ENCODE measurements at regions of chr14 and their contacts with region 1.

Region 1: GRCh38 chr14:49461529-49462401 is 124.4 kb downstream of the RPS29 start:
- DNase-seq: peak; percentile 66
- H3K4me3 ChIP-seq: no peak overlapping the region
- H3K27ac ChIP-seq: no peak overlapping the region
- H3K4me1 ChIP-seq: no peaks in the 10 kb centered on the region
- H3K27me3 ChIP-seq: no peaks in the 10 kb centered on the region
- CTCF ChIP-seq: peak; percentile 76 to 77

Region 2: GRCh38 chr14:48670939-48671338 is 790.8 kb before region 1 on chr14:
- CTCF ChIA-PET with region 1: no interaction called
- dilution Hi-C with region 1: no loop called
- in situ Hi-C with region 1: no loop called
- intact Hi-C with region 1: no loop called
- DNase-seq: no peak
- H3K4me3 ChIP-seq: no peak overlapping the region
- H3K27ac ChIP-seq: no peak overlapping the region
- H3K4me1 ChIP-seq: no peaks in the 10 kb centered on the region
- H3K27me3 ChIP-seq: no peaks in the 10 kb centered on the region
- CTCF ChIP-seq: no peak

Region 3: DNA sequence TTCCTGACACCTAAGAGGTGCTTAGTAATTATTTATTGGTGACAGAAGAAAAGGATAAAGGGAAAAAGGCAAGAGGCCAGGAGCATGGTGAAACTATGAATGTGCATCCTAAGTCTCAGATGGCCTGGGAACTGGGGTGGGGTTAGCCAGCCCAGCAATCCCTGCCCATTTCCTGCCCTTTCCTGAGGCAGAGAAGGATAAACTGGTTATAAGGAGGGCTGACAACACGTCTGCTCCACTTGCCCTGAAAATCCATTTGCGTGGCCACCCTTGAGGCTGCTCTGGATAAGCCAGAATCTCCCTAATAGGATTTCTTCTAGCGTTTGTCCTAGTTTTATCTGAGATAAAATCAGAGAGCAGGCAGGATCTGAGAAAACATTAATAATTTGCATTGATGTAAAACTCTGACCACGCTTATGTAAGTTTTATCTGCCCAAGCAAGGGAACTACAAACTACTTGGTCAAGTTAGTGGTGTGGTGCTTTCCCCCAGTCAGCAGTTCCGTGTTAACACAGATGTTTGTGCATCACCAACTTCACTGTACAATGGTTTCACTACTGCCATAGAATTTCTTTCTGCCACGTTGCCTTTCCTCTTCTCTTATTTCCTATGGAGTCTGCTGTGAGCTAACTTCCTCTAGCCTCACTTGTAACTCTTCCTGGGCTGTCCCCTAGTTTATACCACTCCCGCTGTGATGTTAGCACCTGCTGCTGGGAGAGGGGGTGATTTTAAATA is 268.3 kb before region 1 on chr14:
- CTCF ChIA-PET with region 1: no interaction called
- dilution Hi-C with region 1: no loop called
- in situ Hi-C with region 1: no loop called
- intact Hi-C with region 1: no loop called
- DNase-seq: no peak
- H3K4me3 ChIP-seq: no peak overlapping the region
- H3K27ac ChIP-seq: no peak overlapping the region
- H3K4me1 ChIP-seq: no peaks in the 10 kb centered on the region
- H3K27me3 ChIP-seq: no peaks in the 10 kb centered on the region
- CTCF ChIP-seq: no peak

Region 4: GRCh38 chr14:49487238-49487637 is 25.5 kb after region 1 on chr14:
- CTCF ChIA-PET with region 1: no interaction called
- dilution Hi-C with region 1: no loop called
- in situ Hi-C with region 1: no loop called
- intact Hi-C with region 1: no loop called
- DNase-seq: no peak
- H3K4me3 ChIP-seq: no peak overlapping the region
- H3K27ac ChIP-seq: no peak overlapping the region
- H3K4me1 ChIP-seq: no peaks in the 10 kb centered on the region
- H3K27me3 ChIP-seq: no peaks in the 10 kb centered on the region
- CTCF ChIP-seq: no peak

Region 5: GRCh38 chr14:49497725-49498348 is 36.1 kb after region 1 on chr14:
- CTCF ChIA-PET with region 1: interaction called, 8 read pairs
- dilution Hi-C with region 1: no loop called
- in situ Hi-C with region 1: no loop called
- intact Hi-C with region 1: loop called (anchors 1 kb)
- DNase-seq: peak; percentile 64
- H3K4me3 ChIP-seq: no peak overlapping the region
- H3K27ac ChIP-seq: no peak overlapping the region
- H3K4me1 ChIP-seq: no peaks in the 10 kb centered on the region
- H3K27me3 ChIP-seq: no peaks in the 10 kb centered on the region
- CTCF ChIP-seq: peak; percentile 84 to 88

Region 6: DNA sequence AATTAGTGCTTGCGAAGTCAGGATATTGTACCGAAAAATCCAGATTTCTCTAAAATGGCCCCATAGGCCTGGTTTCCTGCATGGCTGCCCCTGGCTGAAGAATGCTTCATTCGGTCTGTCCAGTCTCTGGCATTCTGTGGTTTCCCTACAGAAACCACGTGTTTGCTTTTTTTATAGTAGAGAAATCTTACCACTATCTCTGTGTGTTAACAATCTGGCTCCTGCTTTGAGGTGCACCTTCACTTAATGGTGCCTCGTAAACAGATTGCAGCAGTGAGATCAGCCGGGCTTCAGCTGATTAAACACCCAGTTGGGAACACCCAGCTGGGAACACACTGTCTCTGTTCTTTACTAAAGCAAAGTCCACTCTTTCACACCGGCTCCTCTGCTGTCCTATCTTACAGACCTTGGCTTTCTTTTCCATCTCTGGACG is 179.9 kb after region 1 on chr14:
- CTCF ChIA-PET with region 1: no interaction called
- dilution Hi-C with region 1: no loop called
- in situ Hi-C with region 1: no loop called
- intact Hi-C with region 1: no loop called
- DNase-seq: no peak
- H3K4me3 ChIP-seq: no peak overlapping the region
- H3K27ac ChIP-seq: no peak overlapping the region
- H3K4me1 ChIP-seq: no peaks in the 10 kb centered on the region
- H3K27me3 ChIP-seq: no peaks in the 10 kb centered on the region
- CTCF ChIP-seq: no peak